ENCODE measurements at regions of chr3 and their contacts with region 1.

Region 1: DNA sequence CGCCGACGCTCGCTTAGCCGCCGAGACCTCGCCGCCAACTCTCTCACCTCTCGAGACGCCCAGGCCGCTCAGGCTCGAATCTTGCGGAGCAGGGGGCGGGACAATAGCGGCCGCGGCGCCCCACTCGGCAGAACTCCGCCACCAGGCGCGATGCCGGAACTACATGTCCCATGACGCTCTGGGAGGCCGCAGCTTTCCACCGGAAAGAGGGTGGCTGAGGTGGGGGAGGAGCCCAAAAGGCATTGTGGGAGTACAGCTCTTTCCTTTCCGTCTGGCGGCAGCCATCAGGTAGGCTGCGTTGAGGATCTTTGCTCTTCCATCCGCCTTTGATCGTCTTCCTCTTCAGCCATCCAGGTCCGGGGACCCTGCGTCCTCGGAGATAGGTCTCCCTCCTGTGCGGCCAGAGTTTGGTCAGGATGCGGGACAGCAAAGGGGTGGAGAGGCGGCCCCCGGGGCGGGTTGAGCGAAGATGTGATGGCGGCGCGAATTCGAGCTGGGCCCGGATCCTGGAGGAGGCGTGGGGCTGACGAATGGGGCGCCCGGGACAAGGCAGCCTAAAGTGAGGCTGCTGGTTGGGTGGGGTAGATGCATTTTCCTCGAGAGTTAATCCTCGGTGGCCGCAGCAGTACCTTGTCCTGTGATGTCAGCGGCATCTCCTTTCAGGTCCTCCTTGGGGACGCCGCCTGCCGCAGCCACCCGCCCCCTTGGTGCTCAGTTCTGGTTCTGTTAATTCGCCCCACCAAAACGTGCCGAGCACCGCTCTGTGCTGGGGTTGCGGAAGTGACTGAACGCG is at the starts of genes NKIRAS1 and RPL15:
- DNase-seq: peak; percentile 99
- H3K4me3 ChIP-seq: peak within 1 kb of the TSS; percentile 71 to 85 (median 80)
- H3K27ac ChIP-seq: peak within 1 kb of the TSS; percentile 88 to 96 (median 92)
- H3K4me1 ChIP-seq: peaks cover 26 to 58% (median 48%) of the 10 kb centered on the region in 4 donors
- H3K27me3 ChIP-seq: no peaks in the 10 kb centered on the region
- CTCF ChIP-seq: peak; percentile 34 to 67 (median 51)
- EP300 ChIP-seq: no peak
- POLR2A ChIP-seq: peak; percentile 98
- total RNA-seq, gene NKIRAS1: 23.4 to 29.4 (median 26.8) TPM
- total RNA-seq, gene RPL15: 1,759 to 2,538 (median 2,309) TPM

Region 2: GRCh38 chr3:23945903-23946751 is 29.0 kb after region 1 on chr3:
- intact Hi-C with region 1: loop called (anchors 2 kb)
- DNase-seq: peak; percentile 99
- H3K4me3 ChIP-seq: peak overlapping the region; percentile 67 to 92 (median 88)
- H3K27ac ChIP-seq: peak overlapping the region; percentile 96 to 100 (median 100)
- H3K4me1 ChIP-seq: peaks cover 51 to 59% (median 55%) of the 10 kb centered on the region in 4 donors
- H3K27me3 ChIP-seq: no peaks in the 10 kb centered on the region
- CTCF ChIP-seq: no peak
- EP300 ChIP-seq: peak; percentile 74
- POLR2A ChIP-seq: peak; percentile 85

Region 3: GRCh38 chr3:23966328-23966727 is 49.2 kb after region 1 on chr3:
- intact Hi-C with region 1: loop called (anchors 2 kb)
- DNase-seq: no peak
- H3K4me3 ChIP-seq: no peak overlapping the region
- H3K27ac ChIP-seq: peak overlapping the region in 3 of 4 donors; percentile 45 to 49 (median 47)
- H3K4me1 ChIP-seq: peaks cover 23 to 65% (median 47%) of the 10 kb centered on the region in 4 donors
- H3K27me3 ChIP-seq: no peaks in the 10 kb centered on the region
- CTCF ChIP-seq: no peak
- EP300 ChIP-seq: no peak
- POLR2A ChIP-seq: no peak

Measured in esophagus muscularis mucosa (tissue), 4 donors.